Naive thymus-derived CD4-positive, alpha-beta T cell (primary cell): ENCODE measurements at regions of chr1 and their contacts with region 1.

Region 1: DNA sequence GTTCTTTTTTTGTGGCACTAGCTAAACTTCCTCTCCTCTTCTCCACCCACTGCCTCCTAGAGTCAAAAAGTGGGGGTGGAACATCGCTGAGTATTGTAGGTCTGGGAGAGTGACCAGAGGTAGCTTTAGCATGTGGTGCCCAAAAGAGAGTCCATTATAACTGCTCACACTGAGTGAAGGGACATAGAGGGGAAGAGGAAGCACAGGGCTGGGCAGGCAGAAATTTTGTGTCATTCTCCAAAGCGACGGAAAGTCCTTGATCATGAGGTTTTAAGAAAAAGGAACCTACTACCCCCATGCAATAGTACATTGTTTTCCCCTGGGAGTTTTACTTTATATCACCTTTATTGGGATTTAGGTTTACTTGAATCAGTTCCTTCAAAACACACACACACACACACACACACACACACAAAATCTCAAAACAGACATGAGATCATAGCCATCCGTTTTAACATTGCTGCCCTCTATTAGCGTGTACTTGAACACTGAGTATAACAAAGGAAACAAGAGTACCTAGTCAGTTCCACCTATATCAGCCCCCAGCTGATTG is 4.1 kb downstream of the CD84 start:
- DNase-seq: peak in 1 of 9 donors; percentile 23
- ATAC-seq: peak; percentile 67
- H3K4me3 ChIP-seq: peak overlapping the region; percentile 66
- H3K4me3 Mint-ChIP-seq: peak overlapping the region; percentile 71 to 97 (median 86)
- H3K27ac ChIP-seq: peak overlapping the region; percentile 79
- H3K27ac Mint-ChIP-seq: peak overlapping the region; percentile 52 to 97 (median 94)
- H3K4me1 ChIP-seq: peaks cover 55 to 86% of the 10 kb centered on the region in 2 donors
- H3K4me1 Mint-ChIP-seq: peaks cover 69 to 100% (median 94%) of the 10 kb centered on the region in 7 donors
- H3K27me3 ChIP-seq: no peaks in the 10 kb centered on the region
- H3K27me3 Mint-ChIP-seq: no peaks in the 10 kb centered on the region

Region 2: DNA sequence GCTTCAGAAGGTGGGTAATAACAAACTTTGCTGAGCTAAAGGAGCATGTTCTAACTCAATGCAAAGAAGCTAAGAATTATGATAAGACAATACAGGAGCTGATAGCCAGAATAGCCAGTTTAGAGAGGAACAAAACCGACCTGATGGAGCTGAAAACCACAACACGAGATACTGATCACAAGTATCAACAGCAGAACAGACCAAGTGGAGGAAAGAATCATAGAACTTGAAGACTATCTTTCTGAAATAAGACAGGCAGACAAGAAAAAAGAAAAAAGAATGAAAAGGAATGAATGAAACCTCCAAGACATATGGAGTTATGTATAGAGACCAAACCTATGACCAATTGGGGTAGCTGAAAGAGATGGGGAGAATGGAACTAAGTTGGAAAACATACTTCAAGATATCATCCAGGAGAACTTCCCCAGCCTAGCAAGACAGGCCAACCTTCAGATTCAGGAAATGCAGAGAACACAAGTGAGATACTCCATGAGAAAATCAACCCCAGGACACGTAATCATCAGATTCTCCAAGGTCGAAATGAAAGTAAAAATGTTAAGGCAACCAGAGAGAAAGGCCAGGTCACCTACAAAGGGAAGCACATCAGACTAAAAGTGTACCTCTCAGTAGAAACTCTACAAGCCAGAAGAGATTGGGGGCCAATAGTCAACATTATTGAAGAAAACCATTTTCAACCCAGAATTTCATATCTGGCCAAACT is 16.4 kb before region 1 on chr1:
- CTCF ChIA-PET with region 1: interaction called, 8 read pairs
- POLR2A ChIA-PET with region 1: interaction called, 70 read pairs
- intact Hi-C with region 1: loop called (anchors 1 to 2 kb)
- DNase-seq: no peak
- ATAC-seq: no peak
- H3K4me3 ChIP-seq: peak overlapping the region; percentile 42
- H3K4me3 Mint-ChIP-seq: peak overlapping the region in 9 of 10 donors; percentile 22 to 90 (median 70)
- H3K27ac ChIP-seq: no peak overlapping the region
- H3K27ac Mint-ChIP-seq: peak overlapping the region; percentile 8 to 97 (median 81)
- H3K4me1 ChIP-seq: peaks cover 36 to 64% of the 10 kb centered on the region in 2 donors
- H3K4me1 Mint-ChIP-seq: peaks cover 33 to 67% (median 57%) of the 10 kb centered on the region in 7 donors
- H3K27me3 ChIP-seq: no peaks in the 10 kb centered on the region
- H3K27me3 Mint-ChIP-seq: no peaks in the 10 kb centered on the region

Region 3: GRCh38 chr1:160590488-160590887 is 15.3 kb after region 1 on chr1:
- CTCF ChIA-PET with region 1: interaction called, 8 read pairs
- POLR2A ChIA-PET with region 1: interaction called, 20 read pairs
- intact Hi-C with region 1: loop called in 1 of 2 experiments (anchors 2 kb)
- DNase-seq: no peak
- ATAC-seq: no peak
- H3K4me3 ChIP-seq: no peak overlapping the region
- H3K4me3 Mint-ChIP-seq: no peak overlapping the region
- H3K27ac ChIP-seq: no peak overlapping the region
- H3K27ac Mint-ChIP-seq: no peak overlapping the region
- H3K4me1 ChIP-seq: peaks cover 0 to 12% of the 10 kb centered on the region in 2 donors
- H3K4me1 Mint-ChIP-seq: peaks cover 5 to 14% (median 6%) of the 10 kb centered on the region in 7 donors
- H3K27me3 ChIP-seq: no peaks in the 10 kb centered on the region
- H3K27me3 Mint-ChIP-seq: no peaks in the 10 kb centered on the region